CD4-positive, alpha-beta T cell (primary cell): ENCODE measurements at regions of chr15 and their contacts with region 1.

Region 1: DNA sequence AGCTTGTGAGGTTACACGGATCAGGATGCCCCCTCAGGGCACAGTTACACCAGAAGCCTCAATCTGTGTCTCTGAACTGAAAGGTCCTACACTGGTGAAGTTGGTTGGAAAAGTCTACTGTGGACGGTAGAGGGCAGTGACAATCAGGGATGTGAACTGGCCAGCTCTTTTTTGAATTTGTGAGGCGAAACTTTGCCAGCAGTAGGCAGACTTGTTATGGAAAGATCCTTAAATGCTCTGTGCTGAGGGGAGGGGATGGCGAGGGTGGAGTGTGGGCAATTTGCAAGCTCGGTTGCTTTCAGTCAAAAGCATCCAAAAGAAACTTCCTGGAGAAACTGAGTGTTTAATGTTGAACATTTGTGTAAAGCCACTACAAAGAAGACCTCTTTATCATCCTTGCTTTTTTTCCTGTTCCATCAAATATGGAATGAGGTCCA is 127.4 kb upstream of the ABHD17C start:
- DNase-seq: peak in 4 of 14 experiments; percentile 8 to 40 (median 35)
- ATAC-seq: no peak
- H3K4me3 ChIP-seq: no peak overlapping the region
- H3K4me3 Mint-ChIP-seq: no peak overlapping the region
- H3K27ac ChIP-seq: no peak overlapping the region
- H3K27ac Mint-ChIP-seq: no peak overlapping the region
- H3K4me1 ChIP-seq: no peaks in the 10 kb centered on the region
- H3K4me1 Mint-ChIP-seq: no peaks in the 10 kb centered on the region
- H3K27me3 ChIP-seq: peaks cover 0 to 15% of the 10 kb centered on the region in 2 experiments
- H3K27me3 Mint-ChIP-seq: peaks cover 20% of the 10 kb centered on the region
- CTCF ChIP-seq: no peak

Region 2: DNA sequence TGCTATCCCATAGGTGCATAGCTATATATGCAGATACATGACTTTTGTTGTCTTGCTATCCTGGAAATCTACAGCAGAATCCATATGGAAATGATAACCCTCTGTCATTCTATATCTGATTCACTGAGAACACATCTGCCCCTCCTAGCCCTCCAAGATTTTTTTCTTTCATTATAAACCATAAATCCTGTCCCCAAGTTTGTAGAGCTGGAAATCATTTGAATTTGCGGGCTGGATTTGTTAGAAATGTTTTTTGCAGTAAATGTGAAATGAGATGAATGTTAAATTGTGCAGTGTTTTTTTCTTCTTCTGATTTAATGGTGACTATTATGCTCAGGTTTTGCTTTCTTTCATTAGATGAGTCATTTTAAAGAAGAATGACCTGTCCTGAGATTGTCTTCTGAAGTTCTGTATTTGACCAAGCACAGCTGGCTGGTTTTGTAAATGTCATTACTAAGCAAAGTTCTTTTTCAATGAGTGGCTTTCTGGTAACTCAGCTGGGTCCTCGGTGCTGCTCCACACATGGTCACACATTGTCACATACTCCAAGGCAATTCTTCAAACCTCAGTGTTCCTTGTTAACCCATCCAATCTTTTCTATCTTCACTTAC is 102.0 kb after region 1 on chr15:
- CTCF ChIA-PET with region 1: no interaction called
- POLR2A ChIA-PET with region 1: no interaction called
- intact Hi-C with region 1: no loop called
- DNase-seq: no peak
- ATAC-seq: no peak
- H3K4me3 ChIP-seq: no peak overlapping the region
- H3K4me3 Mint-ChIP-seq: no peak overlapping the region
- H3K27ac ChIP-seq: no peak overlapping the region
- H3K27ac Mint-ChIP-seq: no peak overlapping the region
- H3K4me1 ChIP-seq: no peaks in the 10 kb centered on the region
- H3K4me1 Mint-ChIP-seq: no peaks in the 10 kb centered on the region
- H3K27me3 ChIP-seq: peaks cover 0 to 6% of the 10 kb centered on the region in 2 experiments
- H3K27me3 Mint-ChIP-seq: peaks cover 31% of the 10 kb centered on the region
- CTCF ChIP-seq: no peak

Region 3: GRCh38 chr15:80776420-80777045 is 208.8 kb after region 1 on chr15:
- CTCF ChIA-PET with region 1: interaction called, 8 read pairs
- POLR2A ChIA-PET with region 1: no interaction called
- intact Hi-C with region 1: loop called in 1 of 2 experiments (anchors 5 kb)
- DNase-seq: peak; percentile 16 to 78 (median 41)
- ATAC-seq: no peak
- H3K4me3 ChIP-seq: no peak overlapping the region
- H3K4me3 Mint-ChIP-seq: no peak overlapping the region
- H3K27ac ChIP-seq: no peak overlapping the region
- H3K27ac Mint-ChIP-seq: no peak overlapping the region
- H3K4me1 ChIP-seq: peaks cover 16% of the 10 kb centered on the region
- H3K4me1 Mint-ChIP-seq: no peaks in the 10 kb centered on the region
- H3K27me3 ChIP-seq: peaks cover 31 to 47% of the 10 kb centered on the region in 2 experiments
- H3K27me3 Mint-ChIP-seq: peaks cover 52% of the 10 kb centered on the region
- CTCF ChIP-seq: peak; percentile 75

Region 4: GRCh38 chr15:80970018-80970658 is 402.4 kb after region 1 on chr15:
- CTCF ChIA-PET with region 1: interaction called, 3 read pairs
- POLR2A ChIA-PET with region 1: interaction called, 3 read pairs
- intact Hi-C with region 1: loop called (anchors 2 kb)
- DNase-seq: peak; percentile 32 to 81 (median 48)
- ATAC-seq: peak; percentile 69
- H3K4me3 ChIP-seq: no peak overlapping the region
- H3K4me3 Mint-ChIP-seq: no peak overlapping the region
- H3K27ac ChIP-seq: no peak overlapping the region
- H3K27ac Mint-ChIP-seq: no peak overlapping the region
- H3K4me1 ChIP-seq: peaks cover 5% of the 10 kb centered on the region
- H3K4me1 Mint-ChIP-seq: peaks cover 19% of the 10 kb centered on the region
- H3K27me3 ChIP-seq: no peaks in the 10 kb centered on the region
- H3K27me3 Mint-ChIP-seq: no peaks in the 10 kb centered on the region
- CTCF ChIP-seq: peak; percentile 96